Ovary (tissue), 10 donors: ENCODE measurements at regions of chr1 and their contacts with region 1.

Region 1: GRCh38 chr1:1959840-1960479 is 40.9 kb upstream of the TMEM52 start:
- DNase-seq: peak; percentile 71 to 92 (median 82)
- H3K4me3 ChIP-seq: no peak overlapping the region
- H3K27ac ChIP-seq: no peak overlapping the region
- H3K4me1 ChIP-seq: peaks cover 1% of the 10 kb centered on the region
- H3K27me3 ChIP-seq: no peaks in the 10 kb centered on the region
- CTCF ChIP-seq: peak in 2 of 3 donors; percentile 26 to 60
- EP300 ChIP-seq: no peak
- POLR2A ChIP-seq: no peak

Region 2: DNA sequence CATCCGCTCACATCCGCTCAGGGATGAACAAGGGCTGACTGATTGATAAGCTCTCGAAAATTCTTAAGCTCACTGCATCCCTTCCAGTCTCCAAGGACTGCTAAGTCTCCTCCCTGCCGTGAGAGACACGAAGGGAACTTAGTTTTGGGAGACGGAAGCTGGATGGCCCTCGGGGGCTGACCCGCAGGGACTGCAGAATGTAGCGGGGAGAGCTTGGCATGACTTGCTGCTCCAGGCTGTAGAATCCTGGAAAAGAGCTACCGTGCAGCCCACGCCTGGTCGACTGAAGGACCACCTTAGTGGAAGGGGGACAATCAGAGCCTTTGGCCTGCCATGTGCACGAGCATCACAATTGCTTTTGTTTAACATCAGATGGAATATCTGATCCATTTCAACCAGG is 544.2 kb before region 1 on chr1:
- intact Hi-C with region 1: no loop called
- DNase-seq: no peak
- H3K4me3 ChIP-seq: no peak overlapping the region
- H3K27ac ChIP-seq: no peak overlapping the region
- H3K4me1 ChIP-seq: peaks cover 9% of the 10 kb centered on the region
- H3K27me3 ChIP-seq: no peaks in the 10 kb centered on the region
- CTCF ChIP-seq: no peak
- EP300 ChIP-seq: no peak
- POLR2A ChIP-seq: no peak

Region 3: DNA sequence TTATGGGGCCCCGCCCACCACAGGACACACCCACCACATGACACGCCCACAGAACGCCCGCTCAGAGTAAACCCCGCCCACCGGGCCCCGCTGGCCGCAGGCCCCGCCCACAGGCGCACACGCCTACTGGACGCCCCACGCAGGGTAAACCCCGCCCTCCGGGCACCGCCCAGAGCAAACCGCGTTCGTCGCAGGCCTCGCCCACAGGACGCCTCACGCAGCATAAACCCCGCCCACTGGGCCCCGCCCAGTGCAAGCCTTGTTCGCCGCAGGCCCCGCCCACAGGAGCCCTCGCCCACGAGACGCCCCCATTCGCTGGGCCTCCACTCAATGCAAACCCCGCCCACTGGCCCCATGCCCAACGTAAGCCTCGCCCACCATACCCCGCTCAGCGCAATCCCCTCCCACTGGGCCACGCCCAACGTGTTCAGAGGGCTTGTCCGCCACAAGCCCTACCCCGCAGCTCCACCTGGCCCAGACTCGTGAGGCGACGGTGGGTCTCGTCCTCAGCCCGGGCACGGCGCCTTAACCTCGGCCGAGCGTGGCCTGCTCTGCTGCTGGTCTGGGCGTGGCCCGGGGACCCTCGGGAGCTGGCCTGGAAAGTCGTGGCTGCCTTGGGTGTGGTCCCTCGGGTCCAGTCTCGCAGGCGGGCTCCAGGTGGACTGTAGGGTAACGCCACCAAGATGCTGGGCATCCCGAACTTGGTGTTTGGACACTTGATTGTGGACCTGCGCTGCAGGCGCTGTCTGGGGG is 40.5 kb before region 1 on chr1:
- intact Hi-C with region 1: no loop called
- DNase-seq: peak; percentile 98 to 100 (median 100)
- H3K4me3 ChIP-seq: peak overlapping the region; percentile 44
- H3K27ac ChIP-seq: peak overlapping the region in 1 of 2 donors; percentile 57
- H3K4me1 ChIP-seq: peaks cover 6% of the 10 kb centered on the region
- H3K27me3 ChIP-seq: no peaks in the 10 kb centered on the region
- CTCF ChIP-seq: no peak
- EP300 ChIP-seq: no peak
- POLR2A ChIP-seq: no peak

Region 4: DNA sequence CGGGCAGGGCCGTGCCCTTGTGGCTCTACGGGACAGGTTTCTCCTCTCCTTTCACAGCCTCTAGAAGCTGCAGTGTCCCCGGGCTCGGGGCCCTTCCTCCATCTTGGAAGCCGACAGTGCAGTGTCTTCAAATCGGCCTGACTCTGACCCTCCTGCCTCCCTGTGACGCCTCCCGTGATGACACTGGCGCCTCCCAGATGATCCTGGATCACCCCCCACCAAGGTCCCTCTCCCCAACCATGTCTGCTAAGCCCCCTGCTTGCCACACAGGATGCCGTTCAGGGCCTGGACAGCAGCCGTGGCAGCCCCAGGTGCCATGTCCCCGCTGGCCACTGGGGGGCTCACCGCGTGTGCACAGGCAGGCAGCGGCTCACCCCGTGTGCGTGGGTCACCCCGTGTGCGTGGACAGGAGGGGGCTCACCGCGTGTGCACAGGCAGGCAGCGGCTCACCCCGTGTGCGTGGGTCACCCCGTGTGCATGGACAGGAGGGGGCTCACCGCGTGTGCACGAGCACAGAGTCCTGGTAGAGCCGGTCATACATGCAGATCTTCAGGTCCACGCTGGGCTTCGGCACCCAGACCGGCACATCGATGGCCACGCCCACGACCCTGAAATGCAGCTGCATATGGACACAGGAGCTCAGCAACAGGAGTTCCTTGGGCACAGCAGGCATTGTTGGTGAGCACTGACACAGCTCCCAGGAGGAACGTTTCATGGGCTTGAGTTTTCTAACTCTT is 16.0 kb before region 1 on chr1:
- intact Hi-C with region 1: no loop called
- DNase-seq: peak; percentile 35 to 75 (median 45)
- H3K4me3 ChIP-seq: no peak overlapping the region
- H3K27ac ChIP-seq: no peak overlapping the region
- H3K4me1 ChIP-seq: peaks cover 3% of the 10 kb centered on the region
- H3K27me3 ChIP-seq: no peaks in the 10 kb centered on the region
- CTCF ChIP-seq: peak; percentile 50 to 73 (median 70)
- EP300 ChIP-seq: no peak
- POLR2A ChIP-seq: no peak

Region 5: GRCh38 chr1:2025534-2025981 is 65.6 kb after region 1 on chr1:
- intact Hi-C with region 1: loop called in 1 of 4 experiments (anchors 10 kb)
- DNase-seq: peak; percentile 54 to 83 (median 59)
- H3K4me3 ChIP-seq: no peak overlapping the region
- H3K27ac ChIP-seq: no peak overlapping the region
- H3K4me1 ChIP-seq: peaks cover 4% of the 10 kb centered on the region
- H3K27me3 ChIP-seq: no peaks in the 10 kb centered on the region
- CTCF ChIP-seq: no peak
- EP300 ChIP-seq: no peak
- POLR2A ChIP-seq: no peak

Region 6: GRCh38 chr1:2044510-2045319 is 84.8 kb after region 1 on chr1:
- intact Hi-C with region 1: loop called (anchors 5 kb)
- DNase-seq: peak; percentile 55 to 85 (median 67)
- H3K4me3 ChIP-seq: no peak overlapping the region
- H3K27ac ChIP-seq: no peak overlapping the region
- H3K4me1 ChIP-seq: peaks cover 1% of the 10 kb centered on the region
- H3K27me3 ChIP-seq: no peaks in the 10 kb centered on the region
- CTCF ChIP-seq: peak; percentile 41 to 94 (median 89)
- EP300 ChIP-seq: no peak
- POLR2A ChIP-seq: no peak